ENCODE measurements at regions of chr22 and their contacts with region 1.

Region 1: GRCh38 chr22:46296257-46297150 is at the start of gene GTSE1:
- DNase-seq: peak; percentile 99
- H3K4me3 Mint-ChIP-seq: peak within 1 kb of the TSS; percentile 91
- H3K27ac Mint-ChIP-seq: peak within 1 kb of the TSS; percentile 94
- H3K4me1 Mint-ChIP-seq: peaks cover 44% of the 10 kb centered on the region
- H3K27me3 Mint-ChIP-seq: no peaks in the 10 kb centered on the region
- total RNA-seq, gene GTSE1: 37.6 and 40.8 TPM in 2 replicates

Region 2: GRCh38 chr22:46250035-46250782 is 46.3 kb before region 1 on chr22 and contains the start of gene CDPF1:
- intact Hi-C with region 1: loop called (anchors 5 kb)
- DNase-seq: peak; percentile 98
- H3K4me3 Mint-ChIP-seq: peak within 1 kb of the TSS; percentile 91
- H3K27ac Mint-ChIP-seq: peak within 1 kb of the TSS; percentile 89
- H3K4me1 Mint-ChIP-seq: peaks cover 27% of the 10 kb centered on the region
- H3K27me3 Mint-ChIP-seq: no peaks in the 10 kb centered on the region
- total RNA-seq, gene CDPF1: 10.4 and 10.6 TPM in 2 replicates

Region 3: GRCh38 chr22:46367707-46368191 is 71.2 kb after region 1 on chr22:
- intact Hi-C with region 1: no loop called
- DNase-seq: peak; percentile 91
- H3K4me3 Mint-ChIP-seq: no peak overlapping the region
- H3K27ac Mint-ChIP-seq: no peak overlapping the region
- H3K4me1 Mint-ChIP-seq: peaks cover 5% of the 10 kb centered on the region
- H3K27me3 Mint-ChIP-seq: peaks cover under 1% of the 10 kb centered on the region

Measured in activated CD4-positive, alpha-beta T cell treated with anti-CD3 and anti-CD28 coated beads, Interleukin-2, amount 10 ng/mL, durations not matched to agents 24 days and 14 days (primary cell).